ENCODE measurements at regions of chr20 and their contacts with region 1.

Region 1: GRCh38 chr20:21505161-21505809 is 8.6 kb downstream of the NKX2-2 start:
- DNase-seq: peak; percentile 68 to 81
- ATAC-seq: peak; percentile 64 to 81 (median 65)
- H3K4me3 ChIP-seq: no peak overlapping the region
- H3K4me3 Mint-ChIP-seq: peak overlapping the region; percentile 70
- H3K27ac ChIP-seq: no peak overlapping the region
- H3K27ac Mint-ChIP-seq: no peak overlapping the region
- H3K4me1 ChIP-seq: peaks cover 19% of the 10 kb centered on the region
- H3K4me1 Mint-ChIP-seq: peaks cover 0 to 5% of the 10 kb centered on the region in 2 donors
- H3K27me3 ChIP-seq: peaks cover 32% of the 10 kb centered on the region
- H3K27me3 Mint-ChIP-seq: peaks cover 51 to 52% of the 10 kb centered on the region in 2 donors
- CTCF ChIP-seq: peak; percentile 94

Region 2: GRCh38 chr20:20860078-20860806 is 645.0 kb before region 1 on chr20:
- intact Hi-C with region 1: loop called (anchors 1 kb)
- DNase-seq: peak; percentile 72 to 83
- ATAC-seq: peak; percentile 59 to 87 (median 66)
- H3K4me3 ChIP-seq: no peak overlapping the region
- H3K4me3 Mint-ChIP-seq: no peak overlapping the region
- H3K27ac ChIP-seq: no peak overlapping the region
- H3K27ac Mint-ChIP-seq: no peak overlapping the region
- H3K4me1 ChIP-seq: no peaks in the 10 kb centered on the region
- H3K4me1 Mint-ChIP-seq: no peaks in the 10 kb centered on the region
- H3K27me3 ChIP-seq: no peaks in the 10 kb centered on the region
- H3K27me3 Mint-ChIP-seq: peaks cover 7 to 23% of the 10 kb centered on the region in 2 donors
- CTCF ChIP-seq: peak; percentile 92

Region 3: GRCh38 chr20:21048841-21049273 is 456.4 kb before region 1 on chr20:
- intact Hi-C with region 1: loop called (anchors 2 kb)
- DNase-seq: peak; percentile 27 to 71
- ATAC-seq: peak; percentile 50 to 66 (median 55)
- H3K4me3 ChIP-seq: no peak overlapping the region
- H3K4me3 Mint-ChIP-seq: no peak overlapping the region
- H3K27ac ChIP-seq: no peak overlapping the region
- H3K27ac Mint-ChIP-seq: no peak overlapping the region
- H3K4me1 ChIP-seq: no peaks in the 10 kb centered on the region
- H3K4me1 Mint-ChIP-seq: no peaks in the 10 kb centered on the region
- H3K27me3 ChIP-seq: no peaks in the 10 kb centered on the region
- H3K27me3 Mint-ChIP-seq: peaks cover 18 to 26% of the 10 kb centered on the region in 2 donors
- CTCF ChIP-seq: peak; percentile 68

Region 4: GRCh38 chr20:21235484-21236445 is 269.5 kb before region 1 on chr20:
- intact Hi-C with region 1: loop called (anchors 1 kb)
- DNase-seq: peak; percentile 33 to 77
- ATAC-seq: peak; percentile 73 to 81 (median 74)
- H3K4me3 ChIP-seq: no peak overlapping the region
- H3K4me3 Mint-ChIP-seq: no peak overlapping the region
- H3K27ac ChIP-seq: no peak overlapping the region
- H3K27ac Mint-ChIP-seq: no peak overlapping the region
- H3K4me1 ChIP-seq: peaks cover 4% of the 10 kb centered on the region
- H3K4me1 Mint-ChIP-seq: peaks cover 4 to 6% of the 10 kb centered on the region in 2 donors
- H3K27me3 ChIP-seq: no peaks in the 10 kb centered on the region
- H3K27me3 Mint-ChIP-seq: no peaks in the 10 kb centered on the region
- CTCF ChIP-seq: peak; percentile 83

Measured in natural killer cell (primary cell).